Uterus (tissue), 4 donors: ENCODE measurements at regions of chr11 and their contacts with region 1.

Region 1: DNA sequence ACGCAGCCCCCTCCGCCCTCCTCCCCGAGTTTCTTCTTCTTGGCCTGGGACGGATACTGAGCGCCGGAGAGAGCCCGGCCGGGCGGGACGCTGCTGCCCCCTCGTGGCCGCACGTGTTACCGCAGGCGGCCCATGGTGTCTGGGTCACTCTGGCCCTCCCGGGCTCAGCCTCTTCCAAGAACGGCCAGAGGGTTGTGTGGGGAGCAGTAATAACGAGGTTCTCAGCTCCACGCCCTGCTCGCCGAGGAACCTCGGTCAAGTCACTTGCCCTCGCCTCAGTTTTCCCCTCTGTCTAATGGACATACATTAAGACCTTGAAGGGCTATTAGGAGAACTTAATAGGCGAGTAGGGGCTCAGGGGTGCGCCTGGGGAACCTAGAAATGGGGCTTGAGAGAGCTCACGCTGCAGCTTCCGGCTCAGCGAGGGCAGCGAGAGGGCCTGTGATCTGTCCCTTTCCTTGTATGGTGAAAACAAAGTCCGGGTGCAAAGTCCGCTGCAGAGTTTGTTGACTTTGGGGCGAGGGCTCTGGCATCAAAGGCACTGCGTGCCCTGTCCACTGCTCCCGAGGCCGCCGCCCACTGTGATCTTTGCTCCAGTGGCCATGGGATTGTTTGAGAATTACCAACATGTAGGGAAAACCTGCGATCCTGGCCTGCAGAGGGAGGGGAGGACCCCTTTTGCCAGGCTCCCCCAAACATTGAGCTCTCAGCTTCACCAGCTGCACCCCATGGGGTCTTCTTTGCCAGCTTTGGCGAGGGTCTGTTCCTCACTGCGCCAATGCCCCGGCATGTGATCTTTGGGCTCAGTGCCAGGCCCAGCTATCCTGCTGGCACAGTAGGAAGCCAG is 14.4 kb upstream of the LRP5 start:
- DNase-seq: peak; percentile 74 to 87
- H3K4me3 ChIP-seq: no peak overlapping the region
- H3K27ac ChIP-seq: peak overlapping the region in 1 of 2 donors; percentile 31
- H3K4me1 ChIP-seq: no peaks in the 10 kb centered on the region
- H3K27me3 ChIP-seq: no peaks in the 10 kb centered on the region
- CTCF ChIP-seq: peak; percentile 95 to 99 (median 98)
- POLR2A ChIP-seq: peak in 1 of 2 donors; percentile 12

Region 2: GRCh38 chr11:68206187-68206601 is 91.8 kb before region 1 on chr11:
- intact Hi-C with region 1: no loop called
- DNase-seq: no peak
- H3K4me3 ChIP-seq: no peak overlapping the region
- H3K27ac ChIP-seq: no peak overlapping the region
- H3K4me1 ChIP-seq: peaks cover 6 to 23% of the 10 kb centered on the region in 2 donors
- H3K27me3 ChIP-seq: no peaks in the 10 kb centered on the region
- CTCF ChIP-seq: peak; percentile 77 to 87 (median 80)
- POLR2A ChIP-seq: no peak

Region 3: GRCh38 chr11:68257475-68258362 is 40.3 kb before region 1 on chr11:
- intact Hi-C with region 1: loop called (anchors 5 kb)
- DNase-seq: peak; percentile 95 to 98
- H3K4me3 ChIP-seq: no peak overlapping the region
- H3K27ac ChIP-seq: peak overlapping the region; percentile 79 to 81
- H3K4me1 ChIP-seq: peaks cover 5 to 8% of the 10 kb centered on the region in 2 donors
- H3K27me3 ChIP-seq: no peaks in the 10 kb centered on the region
- CTCF ChIP-seq: peak; percentile 84 to 95 (median 90)
- POLR2A ChIP-seq: peak in 1 of 2 donors; percentile 15

Region 4: DNA sequence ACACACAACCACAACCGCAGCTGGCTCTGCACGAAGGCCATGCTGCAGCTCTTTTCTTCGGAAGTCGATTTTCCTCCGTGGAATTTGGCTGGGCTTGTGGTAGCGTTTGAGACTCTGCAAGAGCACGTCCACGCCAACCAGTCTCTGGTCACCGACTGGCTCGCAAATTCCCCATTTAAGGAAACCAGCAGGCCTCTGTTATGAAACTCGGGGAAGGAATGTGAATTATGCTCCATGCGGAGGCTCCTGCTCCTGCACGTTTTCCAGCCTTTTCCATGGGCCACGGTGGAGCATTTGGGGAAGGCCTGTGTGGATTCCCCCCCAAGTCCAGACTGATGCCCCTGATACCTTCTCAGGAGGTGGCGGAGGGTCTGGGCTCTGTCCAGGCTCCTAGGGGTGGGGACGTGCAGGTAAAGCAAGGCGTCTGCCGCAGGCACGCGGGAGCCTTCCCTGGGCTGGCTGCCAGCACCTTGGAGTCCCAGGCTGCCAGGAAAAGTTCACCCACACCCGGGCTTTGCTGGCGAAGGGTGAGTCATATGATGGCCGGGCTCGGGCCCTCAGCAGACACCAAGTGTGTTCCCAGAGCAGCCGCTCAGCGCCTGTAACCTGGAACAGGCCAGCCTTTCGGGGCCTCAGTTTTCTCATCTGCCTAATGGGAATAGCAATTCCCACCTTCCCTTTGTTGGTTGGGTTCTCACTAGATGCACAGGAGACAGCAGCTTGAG is 56.3 kb after region 1 on chr11:
- intact Hi-C with region 1: no loop called
- DNase-seq: peak; percentile 89 to 90
- H3K4me3 ChIP-seq: no peak overlapping the region
- H3K27ac ChIP-seq: peak overlapping the region; percentile 89 to 97
- H3K4me1 ChIP-seq: peaks cover 11 to 14% of the 10 kb centered on the region in 2 donors
- H3K27me3 ChIP-seq: no peaks in the 10 kb centered on the region
- CTCF ChIP-seq: peak in 1 of 4 experiments; percentile 10
- POLR2A ChIP-seq: peak in 1 of 2 donors; percentile 9